CD4-positive, alpha-beta T cell (primary cell): ENCODE measurements at regions of chr14 and their contacts with region 1.

Region 1: GRCh38 chr14:64891839-64892375 is 12.2 kb upstream of the SPTB start:
- DNase-seq: peak in 8 of 14 experiments; percentile 11 to 81 (median 37)
- ATAC-seq: peak; percentile 97
- H3K4me3 ChIP-seq: no peak overlapping the region
- H3K4me3 Mint-ChIP-seq: no peak overlapping the region
- H3K27ac ChIP-seq: no peak overlapping the region
- H3K27ac Mint-ChIP-seq: no peak overlapping the region
- H3K4me1 ChIP-seq: no peaks in the 10 kb centered on the region
- H3K4me1 Mint-ChIP-seq: peaks cover 5% of the 10 kb centered on the region
- H3K27me3 ChIP-seq: peaks cover 0 to 4% of the 10 kb centered on the region in 2 experiments
- H3K27me3 Mint-ChIP-seq: peaks cover 13% of the 10 kb centered on the region
- CTCF ChIP-seq: peak; percentile 72

Region 2: DNA sequence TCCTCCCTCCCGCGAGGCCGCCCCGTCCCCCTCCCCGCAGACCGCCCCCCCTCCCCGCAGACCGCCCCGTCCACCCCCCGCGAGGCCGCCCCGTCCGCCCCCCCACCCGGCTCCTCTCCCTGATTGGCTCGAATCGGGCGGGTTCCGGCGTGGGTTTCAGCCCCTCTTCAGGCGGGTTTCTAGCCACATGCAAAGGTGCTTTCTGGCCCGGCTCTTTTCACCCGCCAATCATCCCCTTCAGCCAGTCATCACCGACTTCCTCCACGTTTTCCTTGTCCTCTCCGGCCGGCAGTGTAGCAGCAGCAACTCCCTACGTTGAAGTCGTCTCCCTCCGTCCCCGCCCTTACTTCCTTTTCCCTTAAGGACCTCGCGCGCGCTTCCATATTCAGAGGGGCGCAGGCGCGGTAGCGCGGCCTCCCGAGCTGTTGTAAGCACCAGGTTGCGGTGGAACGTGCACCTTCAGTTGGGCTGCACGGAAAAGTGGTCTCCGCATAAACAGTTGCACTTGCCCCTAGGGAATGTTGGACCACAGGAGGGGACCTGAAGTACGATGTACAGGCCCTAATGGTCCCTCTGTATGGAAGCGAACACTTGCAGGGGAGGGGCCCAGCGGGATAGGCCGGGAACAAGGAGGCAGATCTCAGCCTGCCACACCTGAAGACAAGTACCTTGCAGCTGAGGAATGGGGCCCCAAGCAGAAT is 553.1 kb before region 1 on chr14:
- CTCF ChIA-PET with region 1: interaction called, 4 read pairs
- POLR2A ChIA-PET with region 1: no interaction called
- intact Hi-C with region 1: loop called in 1 of 2 experiments (anchors 5 kb)
- DNase-seq: peak; percentile 58 to 95 (median 80)
- ATAC-seq: peak; percentile 79
- H3K4me3 ChIP-seq: peak overlapping the region; percentile 64
- H3K4me3 Mint-ChIP-seq: peak overlapping the region; percentile 97
- H3K27ac ChIP-seq: peak overlapping the region; percentile 57 to 64
- H3K27ac Mint-ChIP-seq: peak overlapping the region; percentile 84
- H3K4me1 ChIP-seq: peaks cover 13% of the 10 kb centered on the region
- H3K4me1 Mint-ChIP-seq: peaks cover 25% of the 10 kb centered on the region
- H3K27me3 ChIP-seq: no peaks in the 10 kb centered on the region
- H3K27me3 Mint-ChIP-seq: no peaks in the 10 kb centered on the region
- CTCF ChIP-seq: no peak

Region 3: DNA sequence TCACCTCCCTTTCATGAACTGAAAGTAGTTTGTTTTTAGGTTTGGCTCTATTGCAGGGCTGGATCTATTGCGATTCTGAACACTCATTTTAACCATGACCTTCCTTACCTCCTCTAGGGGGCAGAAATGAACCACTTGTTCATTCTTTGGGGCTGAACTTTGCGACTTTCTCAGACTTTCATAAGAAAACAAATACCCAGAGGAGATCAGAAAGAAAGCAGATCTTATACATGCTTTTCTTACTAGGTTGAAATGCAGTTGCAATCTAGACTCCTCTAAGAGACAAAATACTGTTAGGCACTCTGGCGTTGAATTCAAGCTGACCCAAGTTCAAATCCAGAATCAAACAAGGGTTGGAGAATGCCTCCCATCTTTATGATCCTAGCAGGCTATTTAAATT is 220.3 kb before region 1 on chr14:
- CTCF ChIA-PET with region 1: interaction called, 8 read pairs
- POLR2A ChIA-PET with region 1: no interaction called
- intact Hi-C with region 1: loop called (anchors 5 kb)
- DNase-seq: peak in 4 of 14 experiments; percentile 13 to 79 (median 77)
- ATAC-seq: peak; percentile 62
- H3K4me3 ChIP-seq: no peak overlapping the region
- H3K4me3 Mint-ChIP-seq: no peak overlapping the region
- H3K27ac ChIP-seq: no peak overlapping the region
- H3K27ac Mint-ChIP-seq: no peak overlapping the region
- H3K4me1 ChIP-seq: peaks cover 44% of the 10 kb centered on the region
- H3K4me1 Mint-ChIP-seq: peaks cover 28% of the 10 kb centered on the region
- H3K27me3 ChIP-seq: no peaks in the 10 kb centered on the region
- H3K27me3 Mint-ChIP-seq: no peaks in the 10 kb centered on the region
- CTCF ChIP-seq: peak; percentile 65

Region 4: DNA sequence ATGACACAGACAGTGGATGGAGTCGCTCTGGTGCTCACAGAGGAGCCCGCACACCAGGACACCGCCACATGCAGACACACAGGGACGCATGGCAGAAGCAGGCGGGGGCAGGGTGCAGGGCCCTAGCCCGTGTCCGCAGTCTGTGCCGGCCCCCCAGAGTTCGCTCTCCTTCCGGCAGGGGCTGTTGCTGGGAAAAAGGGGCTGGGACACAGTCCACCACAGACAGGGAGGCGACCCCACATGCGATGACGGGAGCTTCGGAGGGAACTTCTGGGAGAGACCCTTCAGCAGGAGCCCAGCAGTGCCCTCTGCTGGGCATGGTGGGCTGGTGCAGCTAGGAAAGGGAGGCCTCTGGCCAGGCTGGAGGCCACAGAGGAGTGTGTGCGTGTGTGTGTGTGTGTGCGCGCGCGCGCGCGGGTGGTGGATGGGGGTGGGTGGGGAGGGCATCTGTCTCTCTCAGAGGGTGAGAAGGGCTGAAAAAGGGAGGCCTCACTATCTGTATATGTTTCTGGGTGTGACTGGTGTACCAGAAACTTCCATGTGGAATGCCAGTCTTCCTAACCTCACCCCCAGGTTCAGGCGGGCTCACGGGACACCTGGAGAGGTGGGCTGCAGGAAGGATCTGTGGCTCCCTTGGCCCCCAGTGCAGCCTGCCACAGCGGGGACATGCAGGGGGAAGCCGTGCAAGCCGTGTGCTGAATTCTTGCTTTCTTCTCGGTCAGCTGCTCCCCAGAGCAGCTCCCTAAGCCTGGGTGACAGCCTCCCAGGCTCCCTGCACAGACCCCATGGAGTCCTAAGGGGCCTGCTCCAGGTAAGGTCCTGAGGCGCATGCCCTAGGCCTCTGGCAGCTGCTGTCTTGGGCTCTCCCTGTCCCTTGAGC is 127.0 kb before region 1 on chr14:
- CTCF ChIA-PET with region 1: interaction called, 5 read pairs
- POLR2A ChIA-PET with region 1: no interaction called
- intact Hi-C with region 1: loop called (anchors 5 kb)
- DNase-seq: peak; percentile 44 to 86 (median 58)
- ATAC-seq: peak; percentile 76
- H3K4me3 ChIP-seq: peak overlapping the region; percentile 33
- H3K4me3 Mint-ChIP-seq: peak overlapping the region; percentile 67
- H3K27ac ChIP-seq: no peak overlapping the region
- H3K27ac Mint-ChIP-seq: no peak overlapping the region
- H3K4me1 ChIP-seq: peaks cover 61% of the 10 kb centered on the region
- H3K4me1 Mint-ChIP-seq: peaks cover 32% of the 10 kb centered on the region
- H3K27me3 ChIP-seq: no peaks in the 10 kb centered on the region
- H3K27me3 Mint-ChIP-seq: no peaks in the 10 kb centered on the region
- CTCF ChIP-seq: peak; percentile 85

Region 5: DNA sequence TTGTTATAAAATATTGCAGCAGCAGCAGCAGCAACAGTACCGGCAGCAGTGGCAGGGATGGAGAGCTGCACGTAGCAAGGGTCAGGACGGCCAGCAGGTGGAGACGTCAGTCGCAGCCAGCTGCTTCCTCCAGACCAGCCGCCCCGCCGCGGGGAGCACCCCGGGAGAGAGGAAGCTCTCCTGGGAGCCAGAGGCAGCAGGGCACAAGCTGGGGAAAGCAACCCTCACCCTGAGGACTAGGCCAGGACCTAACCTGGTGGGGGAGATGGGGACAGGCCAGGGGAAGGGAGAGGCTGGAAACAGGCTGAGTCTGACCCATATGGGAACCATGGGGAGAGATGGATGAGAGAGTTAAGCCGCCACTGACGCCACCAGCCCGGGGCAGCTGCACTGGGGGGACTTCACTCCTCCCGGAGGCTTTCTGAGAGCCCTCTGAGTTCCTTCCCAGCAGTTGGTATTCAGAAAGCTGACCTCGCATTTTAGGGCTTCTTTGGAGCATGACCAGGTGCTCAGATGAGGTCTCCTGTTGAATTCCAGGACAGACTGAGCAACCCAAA is 68.5 kb before region 1 on chr14:
- CTCF ChIA-PET with region 1: interaction called, 37 read pairs
- POLR2A ChIA-PET with region 1: interaction called, 8 read pairs
- intact Hi-C with region 1: loop called (anchors 5 kb)
- DNase-seq: peak; percentile 45 to 83 (median 60)
- ATAC-seq: peak; percentile 83
- H3K4me3 ChIP-seq: no peak overlapping the region
- H3K4me3 Mint-ChIP-seq: peak overlapping the region; percentile 64
- H3K27ac ChIP-seq: no peak overlapping the region
- H3K27ac Mint-ChIP-seq: no peak overlapping the region
- H3K4me1 ChIP-seq: peaks cover 8% of the 10 kb centered on the region
- H3K4me1 Mint-ChIP-seq: peaks cover 5% of the 10 kb centered on the region
- H3K27me3 ChIP-seq: peaks cover 0 to 8% of the 10 kb centered on the region in 2 experiments
- H3K27me3 Mint-ChIP-seq: peaks cover 14% of the 10 kb centered on the region
- CTCF ChIP-seq: peak; percentile 76

Region 6: GRCh38 chr14:64880221-64881121 is 11.4 kb before region 1 on chr14:
- CTCF ChIA-PET with region 1: interaction called, 19 read pairs
- POLR2A ChIA-PET with region 1: interaction called, 14 read pairs
- intact Hi-C with region 1: no loop called
- DNase-seq: peak; percentile 23 to 76 (median 52)
- ATAC-seq: peak; percentile 86
- H3K4me3 ChIP-seq: peak overlapping the region; percentile 68
- H3K4me3 Mint-ChIP-seq: peak overlapping the region; percentile 91
- H3K27ac ChIP-seq: no peak overlapping the region
- H3K27ac Mint-ChIP-seq: no peak overlapping the region
- H3K4me1 ChIP-seq: peaks cover 17% of the 10 kb centered on the region
- H3K4me1 Mint-ChIP-seq: peaks cover 8% of the 10 kb centered on the region
- H3K27me3 ChIP-seq: peaks cover 23 to 26% of the 10 kb centered on the region in 2 experiments
- H3K27me3 Mint-ChIP-seq: peaks cover 65% of the 10 kb centered on the region
- CTCF ChIP-seq: no peak

Region 7: DNA sequence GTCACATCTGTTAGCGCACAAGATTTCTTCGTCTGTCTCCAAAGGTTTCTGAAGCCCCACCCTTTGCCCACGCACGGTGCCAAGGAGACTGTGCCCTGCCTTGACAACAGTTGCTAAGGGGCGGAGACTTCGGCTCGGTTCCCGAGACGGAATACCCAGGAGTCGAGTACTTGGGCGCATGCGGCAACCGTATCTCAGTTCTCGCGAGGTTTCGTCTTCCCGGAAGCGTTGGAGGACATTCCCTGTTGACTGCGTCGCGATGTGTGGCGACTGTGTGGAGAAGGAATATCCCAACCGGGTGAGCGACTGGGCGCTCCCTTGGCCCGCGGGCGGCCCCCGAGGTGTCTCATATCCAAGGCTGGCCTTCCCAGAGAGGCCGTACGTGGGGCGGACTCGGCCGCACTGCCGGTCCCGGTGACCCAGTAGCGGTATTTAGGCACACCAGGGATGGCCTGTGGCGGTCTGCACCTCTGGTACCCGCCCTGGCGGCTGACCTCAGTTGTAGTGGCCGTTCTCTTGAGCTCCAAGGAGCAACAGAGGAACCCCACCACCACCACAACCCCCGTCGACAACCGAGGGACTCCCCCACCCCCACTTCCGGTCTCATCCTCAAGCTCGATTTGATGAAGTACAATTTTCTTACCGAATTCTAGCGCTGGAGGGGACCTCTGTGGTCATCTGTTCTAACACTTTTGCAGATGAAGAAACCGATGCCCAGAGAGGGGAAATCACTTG is 22.5 kb after region 1 on chr14 and contains the start of gene CHURC1:
- CTCF ChIA-PET with region 1: interaction called, 5 read pairs
- POLR2A ChIA-PET with region 1: interaction called, 12 read pairs
- intact Hi-C with region 1: no loop called
- DNase-seq: peak; percentile 94 to 99 (median 96)
- ATAC-seq: peak; percentile 95
- H3K4me3 ChIP-seq: peak within 1 kb of the TSS; percentile 86
- H3K4me3 Mint-ChIP-seq: peak within 1 kb of the TSS; percentile 93
- H3K27ac ChIP-seq: peak within 1 kb of the TSS; percentile 99
- H3K27ac Mint-ChIP-seq: peak within 1 kb of the TSS; percentile 88
- H3K4me1 ChIP-seq: peaks cover 34% of the 10 kb centered on the region
- H3K4me1 Mint-ChIP-seq: peaks cover 57% of the 10 kb centered on the region
- H3K27me3 ChIP-seq: peaks cover 0 to under 1% of the 10 kb centered on the region in 2 experiments
- H3K27me3 Mint-ChIP-seq: no peaks in the 10 kb centered on the region
- CTCF ChIP-seq: no peak
- total RNA-seq, gene CHURC1: 50.1 to 54.0 TPM

Region 8: DNA sequence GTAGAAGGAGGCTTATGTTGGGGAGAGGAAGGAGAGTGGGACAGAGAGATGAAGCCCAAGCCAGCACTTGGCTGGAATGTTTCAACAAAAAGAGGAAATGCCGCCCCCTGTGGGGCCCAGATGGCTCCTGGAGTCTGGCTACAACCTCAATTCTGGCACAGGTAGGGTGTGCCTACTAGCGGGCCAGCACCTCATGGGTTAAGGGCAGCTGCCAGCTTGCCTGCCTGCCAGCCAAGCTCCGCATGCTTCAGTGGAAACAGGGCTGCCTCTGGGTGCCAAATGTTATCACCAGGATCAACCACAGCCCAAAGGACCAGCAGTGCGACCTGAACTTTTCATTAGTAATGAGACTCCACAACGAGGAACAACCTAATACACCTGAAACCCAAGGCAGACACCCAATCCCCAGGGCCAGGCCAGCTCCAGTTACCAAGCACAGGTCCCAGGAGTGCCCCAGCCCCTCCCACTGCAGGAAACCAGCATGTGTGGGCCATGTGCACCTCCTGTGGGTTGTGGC is 68.9 kb after region 1 on chr14:
- CTCF ChIA-PET with region 1: no interaction called
- POLR2A ChIA-PET with region 1: no interaction called
- intact Hi-C with region 1: no loop called
- DNase-seq: no peak
- ATAC-seq: no peak
- H3K4me3 ChIP-seq: no peak overlapping the region
- H3K4me3 Mint-ChIP-seq: no peak overlapping the region
- H3K27ac ChIP-seq: no peak overlapping the region
- H3K27ac Mint-ChIP-seq: no peak overlapping the region
- H3K4me1 ChIP-seq: no peaks in the 10 kb centered on the region
- H3K4me1 Mint-ChIP-seq: no peaks in the 10 kb centered on the region
- H3K27me3 ChIP-seq: no peaks in the 10 kb centered on the region
- H3K27me3 Mint-ChIP-seq: no peaks in the 10 kb centered on the region
- CTCF ChIP-seq: no peak